Posterior vena cava (tissue), 2 donors: ENCODE measurements at regions of chr20 and their contacts with region 1.

Region 1: GRCh38 chr20:37534401-37535157 is 6.9 kb upstream of the BLCAP start:
- DNase-seq: peak; percentile 17

Region 2: GRCh38 chr20:37209661-37210314 is 324.8 kb before region 1 on chr20:
- intact Hi-C with region 1: loop called (anchors 5 kb)
- DNase-seq: no peak

Region 3: GRCh38 chr20:37270576-37271420 is 263.8 kb before region 1 on chr20:
- intact Hi-C with region 1: loop called (anchors 5 kb)
- DNase-seq: no peak